ENCODE measurements at regions of chr20 and their contacts with region 1.

Region 1: DNA sequence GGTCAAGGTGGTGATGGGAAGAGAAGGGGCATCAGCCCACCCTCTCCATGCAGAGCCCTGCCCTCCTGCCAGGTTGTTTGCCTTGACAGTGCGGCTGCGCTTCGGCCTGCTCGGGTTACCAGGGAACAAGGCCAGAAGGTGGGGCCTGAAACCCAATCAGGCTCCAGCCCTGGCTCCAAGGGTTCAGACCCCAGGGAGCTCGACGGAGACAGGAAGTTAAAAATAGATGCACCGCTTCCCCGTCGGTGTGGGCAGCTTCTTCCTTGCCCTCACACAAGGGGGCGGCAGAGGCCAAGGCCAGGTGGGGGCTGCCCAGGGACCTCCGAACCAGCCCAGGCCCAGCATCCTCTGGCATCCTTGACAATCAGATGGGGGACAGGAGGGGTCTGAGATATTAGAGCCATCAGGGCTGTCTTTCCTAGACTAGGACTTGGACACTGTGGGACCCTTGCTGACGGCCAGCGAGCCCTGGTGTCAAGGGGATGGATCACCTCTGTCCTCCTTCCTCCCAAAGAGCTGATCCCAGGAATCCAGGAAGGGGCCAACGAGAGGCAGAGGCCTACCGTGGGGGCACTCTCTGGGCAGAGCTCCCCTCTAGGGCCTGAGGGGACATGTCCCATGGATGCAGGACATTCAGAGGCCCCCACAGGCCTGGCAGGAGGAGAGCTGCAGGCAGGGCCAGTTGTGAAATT is 65.2 kb downstream of the RIPOR3 start:
- DNase-seq: no peak
- H3K4me3 ChIP-seq: no peak overlapping the region
- H3K27ac ChIP-seq: no peak overlapping the region
- H3K4me1 ChIP-seq: peaks cover 26% of the 10 kb centered on the region
- H3K27me3 ChIP-seq: no peaks in the 10 kb centered on the region
- CTCF ChIP-seq: peak; percentile 37 to 51

Region 2: DNA sequence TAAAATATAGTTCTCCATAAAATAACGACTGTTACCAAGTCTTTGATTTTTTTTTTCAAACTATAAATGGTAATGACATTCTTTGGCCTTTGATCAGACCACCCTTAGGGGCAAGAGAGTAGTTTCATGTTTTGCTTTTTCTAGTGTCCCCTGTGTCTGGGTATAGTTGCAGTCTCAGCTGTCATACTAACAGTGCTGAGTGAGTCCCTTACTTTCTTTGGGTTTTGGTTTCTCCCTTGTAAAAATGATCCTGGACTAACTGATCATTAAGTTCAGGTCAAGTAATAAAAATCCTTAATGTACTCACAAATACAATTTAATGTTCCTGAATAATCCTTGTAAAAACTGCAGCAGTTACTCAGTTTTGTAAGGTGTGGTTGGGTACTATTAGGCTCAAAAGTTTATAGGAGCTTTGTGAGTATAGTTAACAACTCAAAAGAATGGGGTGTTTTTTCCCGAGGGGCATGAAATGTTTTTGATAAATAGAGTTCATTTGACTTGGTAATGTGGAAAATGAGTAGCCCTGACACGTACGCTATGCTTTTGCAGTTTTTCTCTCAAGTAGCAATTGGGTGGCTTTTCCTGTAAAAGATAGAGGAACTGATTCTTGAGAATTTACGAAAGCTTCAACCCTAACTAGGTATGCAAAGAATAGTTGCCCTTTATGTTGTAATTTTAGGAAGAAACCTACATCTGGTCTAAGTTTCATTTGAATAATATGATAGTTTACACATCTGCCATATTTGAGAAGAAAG is 109.8 kb before region 1 on chr20:
- CTCF ChIA-PET with region 1: no interaction called
- dilution Hi-C with region 1: no loop called
- in situ Hi-C with region 1: no loop called
- intact Hi-C with region 1: no loop called
- DNase-seq: no peak
- H3K4me3 ChIP-seq: no peak overlapping the region
- H3K27ac ChIP-seq: no peak overlapping the region
- H3K4me1 ChIP-seq: peaks cover 60% of the 10 kb centered on the region
- H3K27me3 ChIP-seq: no peaks in the 10 kb centered on the region
- CTCF ChIP-seq: no peak

Region 3: DNA sequence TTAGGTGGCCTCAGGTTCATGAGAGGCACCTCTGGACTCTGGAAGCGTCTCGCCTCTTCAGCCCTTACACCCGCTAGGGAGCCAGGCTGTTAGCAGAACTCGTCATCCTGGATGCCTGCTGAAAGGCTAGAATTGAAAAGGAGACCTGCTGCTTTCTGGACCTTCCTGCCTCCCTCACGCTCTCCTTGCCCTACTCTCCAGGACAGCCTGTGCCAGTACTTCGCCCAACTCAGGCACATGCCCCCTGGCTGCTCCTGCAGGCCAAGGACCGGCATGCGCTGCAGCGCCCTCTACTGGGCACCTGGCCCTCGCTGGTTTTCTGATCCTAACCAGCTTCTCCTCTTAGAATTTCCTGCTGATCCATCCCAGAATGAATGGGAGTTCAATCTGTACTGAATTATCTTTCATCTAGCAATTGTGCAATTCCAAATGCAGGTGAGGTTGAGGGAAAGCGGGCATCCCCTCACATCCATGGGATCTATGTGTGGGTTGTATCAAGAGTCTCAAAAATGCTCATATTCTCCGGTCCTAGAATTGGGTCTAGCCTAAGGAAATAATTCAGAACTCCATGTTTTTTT is 38.0 kb before region 1 on chr20:
- CTCF ChIA-PET with region 1: no interaction called
- dilution Hi-C with region 1: loop called (anchors 5 kb)
- in situ Hi-C with region 1: no loop called
- intact Hi-C with region 1: no loop called
- DNase-seq: peak; percentile 54
- H3K4me3 ChIP-seq: no peak overlapping the region
- H3K27ac ChIP-seq: no peak overlapping the region
- H3K4me1 ChIP-seq: peaks cover 25% of the 10 kb centered on the region
- H3K27me3 ChIP-seq: no peaks in the 10 kb centered on the region
- CTCF ChIP-seq: peak; percentile 96 to 99

Region 4: GRCh38 chr20:50943069-50943468 is 316.9 kb after region 1 on chr20:
- CTCF ChIA-PET with region 1: no interaction called
- dilution Hi-C with region 1: no loop called
- in situ Hi-C with region 1: no loop called
- intact Hi-C with region 1: loop called (anchors 10 kb)
- DNase-seq: no peak
- H3K4me3 ChIP-seq: no peak overlapping the region
- H3K27ac ChIP-seq: no peak overlapping the region
- H3K4me1 ChIP-seq: no peaks in the 10 kb centered on the region
- H3K27me3 ChIP-seq: no peaks in the 10 kb centered on the region
- CTCF ChIP-seq: no peak